Prostate gland (tissue), 2 donors: ENCODE measurements at regions of chr9 and their contacts with region 1.

Region 1: DNA sequence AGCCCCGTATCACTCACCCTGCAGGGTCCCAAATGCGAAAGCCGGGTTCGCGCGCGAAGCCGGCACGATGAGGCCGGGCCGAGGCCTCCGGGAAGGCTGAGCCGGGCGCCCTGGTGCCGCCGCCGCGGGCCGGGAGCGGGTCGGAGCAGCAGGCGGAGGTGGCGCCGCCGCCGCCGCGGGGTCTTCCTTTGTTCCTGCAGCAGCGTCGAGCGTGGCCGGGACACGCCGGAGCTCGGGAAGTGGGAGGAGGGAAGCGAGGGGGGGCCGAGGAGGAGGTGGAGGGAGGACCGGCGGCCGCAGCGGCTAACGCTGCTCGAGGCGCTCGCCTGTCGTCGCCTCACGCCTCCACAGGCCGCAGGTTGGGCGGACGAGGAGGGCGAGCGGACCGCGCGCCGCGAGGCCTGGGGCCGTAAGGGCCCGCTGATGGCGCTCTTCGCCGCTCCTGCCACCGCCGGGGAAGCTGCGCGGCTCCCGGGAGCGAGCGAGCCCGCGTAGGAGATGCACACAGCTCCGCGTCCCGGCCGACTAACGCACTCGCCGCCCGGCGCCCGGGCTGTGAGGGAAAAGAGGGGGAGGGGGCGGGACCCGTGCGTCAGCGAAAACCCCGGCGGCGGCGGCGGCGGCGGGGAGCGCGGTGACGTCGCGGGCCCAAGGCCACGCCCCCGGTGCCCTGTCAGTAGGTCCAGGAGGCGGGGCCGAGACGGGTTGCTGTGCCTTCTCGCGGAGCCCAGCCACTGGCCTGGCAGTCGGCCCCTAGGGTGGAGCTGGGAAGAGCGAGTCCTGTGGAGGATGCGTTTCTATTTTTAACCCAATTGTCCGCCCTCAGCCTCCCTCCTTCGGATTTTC is at the start of gene ZFAND5:
- DNase-seq: peak; percentile 99
- H3K4me3 ChIP-seq: peak within 1 kb of the TSS; percentile 84 to 98
- H3K27ac ChIP-seq: peak within 1 kb of the TSS; percentile 100
- H3K4me1 ChIP-seq: no peaks in the 10 kb centered on the region
- H3K27me3 ChIP-seq: no peaks in the 10 kb centered on the region
- CTCF ChIP-seq: peak in 2 of 4 experiments; percentile 22 to 38
- POLR2A ChIP-seq: peak; percentile 100
- total RNA-seq, gene ZFAND5: 143 to 288 TPM

Region 2: GRCh38 chr9:72292256-72292682 is 72.6 kb before region 1 on chr9:
- intact Hi-C with region 1: loop called (anchors 5 kb)
- DNase-seq: no peak
- H3K4me3 ChIP-seq: no peak overlapping the region
- H3K27ac ChIP-seq: no peak overlapping the region
- H3K4me1 ChIP-seq: no peaks in the 10 kb centered on the region
- H3K27me3 ChIP-seq: no peaks in the 10 kb centered on the region
- CTCF ChIP-seq: peak in 3 of 4 experiments; percentile 69 to 81 (median 70)
- POLR2A ChIP-seq: no peak

Region 3: DNA sequence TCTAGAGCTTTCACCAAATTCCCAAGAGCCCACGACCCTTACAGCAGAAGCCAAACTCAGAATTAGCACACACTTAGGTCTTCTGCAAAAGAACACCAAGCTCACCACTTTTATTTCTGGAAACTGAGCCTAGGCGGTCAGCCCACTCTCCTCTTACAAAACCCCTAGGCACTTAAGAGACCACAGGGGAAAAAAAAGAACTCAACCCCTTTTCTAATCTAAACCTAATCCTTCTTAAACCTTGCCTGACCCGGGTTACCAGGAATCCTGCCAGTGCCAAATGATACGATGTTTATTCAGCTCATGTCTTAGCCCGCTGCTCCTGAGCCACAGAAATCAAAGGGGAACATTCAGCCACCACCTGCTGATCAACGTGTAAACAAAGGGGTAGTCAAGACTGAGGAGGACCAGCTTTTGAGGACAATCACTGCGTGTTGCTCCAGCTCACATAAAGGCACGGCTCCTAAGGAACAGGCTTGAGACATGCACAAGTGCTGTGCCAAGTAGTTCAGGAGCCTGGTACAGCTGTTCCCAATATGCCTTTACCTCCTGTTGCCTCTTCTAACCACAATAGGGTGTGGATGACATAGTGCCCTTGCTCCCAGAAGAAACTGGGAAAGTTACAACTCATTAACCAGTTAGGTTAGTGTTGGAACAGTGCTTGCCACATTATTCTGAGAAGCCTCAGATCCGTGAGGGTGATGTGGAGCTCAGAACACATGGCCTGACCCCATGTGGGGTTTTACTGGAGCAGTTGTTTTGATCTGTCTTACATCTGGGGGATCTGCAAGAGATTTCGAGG is 49.2 kb before region 1 on chr9:
- intact Hi-C with region 1: loop called (anchors 1 kb)
- DNase-seq: peak; percentile 86
- H3K4me3 ChIP-seq: no peak overlapping the region
- H3K27ac ChIP-seq: peak overlapping the region; percentile 71 to 84
- H3K4me1 ChIP-seq: peaks cover 7% of the 10 kb centered on the region
- H3K27me3 ChIP-seq: no peaks in the 10 kb centered on the region
- CTCF ChIP-seq: no peak
- POLR2A ChIP-seq: no peak

Region 4: DNA sequence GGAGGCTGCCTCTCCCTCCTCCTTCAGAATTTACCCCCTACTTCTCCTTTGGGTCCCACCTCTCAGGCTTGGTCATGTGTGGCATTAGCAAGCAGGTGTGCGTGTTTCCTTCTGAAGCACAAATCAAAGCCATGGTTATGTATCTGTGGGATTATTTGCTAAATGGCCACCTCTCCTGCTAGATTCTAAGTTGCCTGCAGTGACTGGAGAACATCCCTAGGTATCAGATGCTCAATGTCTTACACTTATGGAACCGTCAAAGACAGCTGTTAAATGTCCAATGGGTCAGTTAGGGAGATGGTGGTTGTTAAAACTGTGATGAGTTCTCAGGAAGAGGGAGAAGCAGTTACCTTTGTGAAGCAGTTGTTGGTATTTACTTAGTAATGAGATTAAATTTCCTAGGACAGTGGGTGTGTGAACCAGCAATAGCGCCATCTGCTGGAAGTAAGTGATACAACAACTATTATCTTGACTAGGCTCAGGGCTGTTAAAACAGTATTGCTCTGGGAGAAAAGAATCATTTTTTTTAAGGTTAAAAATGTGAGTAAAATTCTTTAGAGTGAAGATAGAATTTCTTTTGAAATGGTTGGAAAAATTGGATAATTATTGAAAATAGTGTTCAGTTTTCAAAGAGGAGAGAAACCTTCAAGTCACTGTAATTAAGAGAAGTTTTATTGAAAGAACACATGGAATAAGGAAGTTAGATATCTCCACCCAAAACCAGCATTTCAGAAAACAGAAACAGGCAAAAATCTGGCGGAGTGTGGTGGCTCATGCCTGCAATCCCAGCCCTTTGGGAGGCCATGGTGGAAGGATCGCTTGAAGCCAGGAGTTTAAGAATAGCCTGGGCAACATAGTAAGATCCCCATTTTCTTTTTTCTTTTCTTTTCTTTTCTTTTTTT is 227.9 kb after region 1 on chr9:
- intact Hi-C with region 1: loop called (anchors 2 kb)
- DNase-seq: peak; percentile 62
- H3K4me3 ChIP-seq: no peak overlapping the region
- H3K27ac ChIP-seq: no peak overlapping the region
- H3K4me1 ChIP-seq: no peaks in the 10 kb centered on the region
- H3K27me3 ChIP-seq: no peaks in the 10 kb centered on the region
- CTCF ChIP-seq: peak; percentile 85 to 99 (median 93)
- POLR2A ChIP-seq: no peak